Activated naive CD4-positive, alpha-beta T cell treated with anti-CD3 and anti-CD28 coated beads for 36 hours (primary cell): ENCODE measurements at regions of chr10 and their contacts with region 1.

Region 1: DNA sequence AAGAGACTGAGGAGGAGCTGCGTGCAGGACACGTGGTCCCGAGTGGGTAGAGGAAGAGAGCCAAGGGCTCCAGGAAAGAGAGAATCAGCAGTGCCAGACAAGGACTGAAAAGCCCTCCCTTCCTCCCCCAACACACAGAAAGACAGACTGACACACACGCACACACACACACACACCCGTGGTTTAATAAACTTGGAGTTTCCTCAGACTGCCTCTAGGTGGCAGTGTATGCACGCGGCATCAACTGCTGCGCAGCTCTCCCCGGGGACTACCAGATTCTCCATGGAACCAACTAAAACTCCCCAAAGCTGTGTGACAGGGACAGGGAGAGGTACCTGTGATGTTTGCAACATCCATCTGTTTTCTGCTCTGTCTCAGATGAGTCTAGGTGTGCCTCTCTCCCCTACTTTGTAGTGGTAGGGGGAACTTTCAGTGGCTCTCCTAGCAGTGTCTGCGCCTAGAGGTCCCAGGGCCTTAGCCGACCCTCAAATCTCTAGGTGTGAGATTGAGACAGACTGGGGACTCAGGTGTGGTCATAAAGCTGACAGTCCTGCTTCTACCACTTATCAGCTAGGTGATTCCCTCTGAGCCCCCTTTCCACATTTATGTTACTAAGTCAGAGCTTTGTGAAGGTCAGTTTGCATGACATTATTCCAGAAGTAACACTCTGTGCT is 9.3 kb upstream of the TSPAN14 start:
- DNase-seq: peak; percentile 82
- H3K4me3 Mint-ChIP-seq: no peak overlapping the region
- H3K27ac Mint-ChIP-seq: peak overlapping the region; percentile 61
- H3K4me1 Mint-ChIP-seq: peaks cover 59% of the 10 kb centered on the region
- H3K27me3 Mint-ChIP-seq: no peaks in the 10 kb centered on the region

Region 2: GRCh38 chr10:80459047-80459931 is 14.5 kb after region 1 on chr10:
- CTCF ChIA-PET with region 1: interaction called, 26 read pairs
- intact Hi-C with region 1: no loop called
- DNase-seq: peak; percentile 83
- H3K4me3 Mint-ChIP-seq: peak overlapping the region; percentile 76
- H3K27ac Mint-ChIP-seq: peak overlapping the region; percentile 93
- H3K4me1 Mint-ChIP-seq: peaks cover 82% of the 10 kb centered on the region
- H3K27me3 Mint-ChIP-seq: no peaks in the 10 kb centered on the region

Region 3: GRCh38 chr10:80498833-80499741 is 54.3 kb after region 1 on chr10:
- CTCF ChIA-PET with region 1: interaction called, 916 read pairs
- intact Hi-C with region 1: no loop called
- DNase-seq: peak; percentile 86
- H3K4me3 Mint-ChIP-seq: peak overlapping the region; percentile 53
- H3K27ac Mint-ChIP-seq: peak overlapping the region; percentile 97
- H3K4me1 Mint-ChIP-seq: peaks cover 99% of the 10 kb centered on the region
- H3K27me3 Mint-ChIP-seq: no peaks in the 10 kb centered on the region

Region 4: DNA sequence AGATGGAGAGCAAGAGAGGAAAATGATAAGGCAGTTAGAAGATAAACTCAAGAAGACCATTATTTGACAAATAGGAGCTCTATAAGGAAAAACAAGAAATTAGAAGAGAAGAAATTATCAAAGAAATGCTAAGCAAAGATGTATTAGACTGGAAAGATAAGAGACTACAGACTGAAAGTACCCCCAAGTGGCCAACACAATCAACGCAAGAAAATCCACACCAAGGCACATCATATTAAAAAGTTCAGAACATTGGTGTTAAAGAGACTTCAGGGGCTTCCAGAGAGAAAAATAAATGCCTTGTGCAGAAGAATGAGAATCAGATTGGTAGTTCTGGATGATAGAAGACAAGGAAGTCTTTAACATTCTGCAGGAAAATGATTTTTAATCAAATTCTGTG is 138.9 kb after region 1 on chr10:
- CTCF ChIA-PET with region 1: interaction called, 5 read pairs
- intact Hi-C with region 1: loop called (anchors 2 kb)
- DNase-seq: no peak
- H3K4me3 Mint-ChIP-seq: no peak overlapping the region
- H3K27ac Mint-ChIP-seq: no peak overlapping the region
- H3K4me1 Mint-ChIP-seq: peaks cover 6% of the 10 kb centered on the region
- H3K27me3 Mint-ChIP-seq: no peaks in the 10 kb centered on the region

Region 5: GRCh38 chr10:80699602-80700039 is 254.8 kb after region 1 on chr10:
- CTCF ChIA-PET with region 1: interaction called, 17 read pairs
- intact Hi-C with region 1: loop called (anchors 2 kb)
- DNase-seq: peak; percentile 87
- H3K4me3 Mint-ChIP-seq: no peak overlapping the region
- H3K27ac Mint-ChIP-seq: no peak overlapping the region
- H3K4me1 Mint-ChIP-seq: no peaks in the 10 kb centered on the region
- H3K27me3 Mint-ChIP-seq: no peaks in the 10 kb centered on the region